Activated CD8-positive, alpha-beta T cell treated with anti-CD3 and anti-CD28 coated beads, Interleukin-2, amount 10 ng/mL, durations not matched to agents 7 days and 5 days (primary cell): ENCODE measurements at regions of chr15 and their contacts with region 1.

Region 1: DNA sequence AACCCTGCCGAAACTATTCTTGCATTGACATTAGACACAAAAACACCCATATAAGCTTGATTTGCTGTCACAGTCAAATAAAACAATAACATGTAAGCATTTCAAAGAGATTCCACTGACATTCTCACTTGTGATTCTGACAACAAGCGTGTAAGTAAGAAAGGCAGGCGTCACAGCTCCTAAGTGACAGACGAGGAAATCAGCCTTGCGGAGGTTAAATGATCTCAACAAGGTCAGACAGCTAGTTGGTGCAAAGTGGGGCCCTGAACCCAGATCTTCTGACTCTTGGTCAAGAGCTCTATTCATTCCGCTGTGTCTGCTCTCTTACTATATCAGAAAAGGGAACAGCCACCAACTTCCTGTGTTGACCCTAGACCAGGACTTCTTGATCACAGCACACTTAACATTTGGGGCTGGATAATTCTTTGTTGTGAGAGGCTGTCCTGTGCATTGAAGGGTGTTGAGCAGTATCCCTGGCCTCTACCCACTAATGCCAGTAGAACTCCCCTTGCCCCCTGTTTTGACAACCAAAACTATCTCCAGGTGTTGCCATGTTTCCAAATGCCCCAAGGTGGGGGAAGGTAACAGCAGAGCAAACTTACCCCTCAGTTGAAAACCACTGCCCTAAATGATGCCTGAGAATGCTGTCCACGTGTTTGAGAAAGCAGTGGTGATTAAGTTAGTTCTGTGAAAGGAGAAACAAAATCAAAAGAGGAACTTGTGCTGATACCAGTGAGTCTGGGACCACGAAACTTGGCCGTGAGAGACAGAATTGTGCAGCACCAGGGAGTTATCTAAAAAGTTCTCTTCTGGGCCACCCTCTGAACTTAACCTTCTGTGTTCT is 86.1 kb downstream of the LIPC start:
- DNase-seq: peak; percentile 48
- ATAC-seq: peak; percentile 36
- H3K4me3 Mint-ChIP-seq: peak overlapping the region; percentile 15
- H3K27ac Mint-ChIP-seq: peak overlapping the region; percentile 88
- H3K4me1 Mint-ChIP-seq: peaks cover 69% of the 10 kb centered on the region
- H3K27me3 Mint-ChIP-seq: no peaks in the 10 kb centered on the region

Region 2: GRCh38 chr15:58440158-58440910 is 77.6 kb before region 1 on chr15:
- CTCF ChIA-PET with region 1: interaction called, 13 read pairs
- POLR2A ChIA-PET with region 1: no interaction called
- DNase-seq: no peak
- ATAC-seq: no peak
- H3K4me3 Mint-ChIP-seq: no peak overlapping the region
- H3K27ac Mint-ChIP-seq: peak overlapping the region; percentile 5
- H3K4me1 Mint-ChIP-seq: peaks cover 41% of the 10 kb centered on the region
- H3K27me3 Mint-ChIP-seq: no peaks in the 10 kb centered on the region

Region 3: DNA sequence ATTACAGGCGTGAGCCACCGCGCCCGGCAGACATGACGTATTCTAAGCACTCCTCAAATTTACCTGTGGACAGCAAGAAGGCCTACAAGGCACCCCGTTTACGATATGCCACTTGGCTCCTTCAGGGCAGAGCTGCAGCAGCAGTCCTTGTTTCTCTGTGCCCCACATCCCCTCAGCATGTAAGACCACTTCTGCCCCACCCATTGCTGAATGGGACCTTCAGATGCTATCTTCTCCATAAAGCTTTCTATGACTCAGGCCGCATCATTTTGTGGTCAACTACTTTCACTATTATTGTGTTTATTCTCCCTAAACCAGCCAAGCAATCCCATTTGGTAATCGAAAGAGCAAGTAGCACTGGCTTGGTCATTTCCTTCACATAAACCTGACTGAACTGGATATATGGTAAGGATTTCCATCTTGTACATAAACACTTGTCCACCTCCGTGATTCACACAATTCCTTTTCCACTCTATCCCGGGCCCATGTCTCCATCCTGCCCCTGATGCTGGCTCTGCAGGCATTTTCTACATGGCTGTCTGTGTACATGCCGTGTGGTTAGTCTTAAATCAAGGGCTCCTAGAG is 60.4 kb before region 1 on chr15:
- CTCF ChIA-PET with region 1: interaction called, 20 read pairs
- POLR2A ChIA-PET with region 1: interaction called, 6 read pairs
- DNase-seq: peak; percentile 64
- ATAC-seq: peak; percentile 64
- H3K4me3 Mint-ChIP-seq: no peak overlapping the region
- H3K27ac Mint-ChIP-seq: peak overlapping the region; percentile 72
- H3K4me1 Mint-ChIP-seq: peaks cover 81% of the 10 kb centered on the region
- H3K27me3 Mint-ChIP-seq: no peaks in the 10 kb centered on the region

Region 4: GRCh38 chr15:58475573-58476524 is 42.1 kb before region 1 on chr15:
- CTCF ChIA-PET with region 1: interaction called, 11 read pairs
- POLR2A ChIA-PET with region 1: interaction called, 4 read pairs
- DNase-seq: peak; percentile 35
- ATAC-seq: no peak
- H3K4me3 Mint-ChIP-seq: peak overlapping the region; percentile 44
- H3K27ac Mint-ChIP-seq: peak overlapping the region; percentile 95
- H3K4me1 Mint-ChIP-seq: peaks cover 78% of the 10 kb centered on the region
- H3K27me3 Mint-ChIP-seq: no peaks in the 10 kb centered on the region

Region 5: GRCh38 chr15:58484791-58485600 is 32.9 kb before region 1 on chr15:
- CTCF ChIA-PET with region 1: interaction called, 5 read pairs
- POLR2A ChIA-PET with region 1: interaction called, 17 read pairs
- DNase-seq: peak; percentile 85
- ATAC-seq: peak; percentile 81
- H3K4me3 Mint-ChIP-seq: peak overlapping the region; percentile 60
- H3K27ac Mint-ChIP-seq: peak overlapping the region; percentile 95
- H3K4me1 Mint-ChIP-seq: peaks cover 53% of the 10 kb centered on the region
- H3K27me3 Mint-ChIP-seq: no peaks in the 10 kb centered on the region

Region 6: GRCh38 chr15:58495891-58496408 is 22.0 kb before region 1 on chr15:
- CTCF ChIA-PET with region 1: interaction called, 10 read pairs
- POLR2A ChIA-PET with region 1: interaction called, 3 read pairs
- DNase-seq: no peak
- ATAC-seq: peak; percentile 60
- H3K4me3 Mint-ChIP-seq: no peak overlapping the region
- H3K27ac Mint-ChIP-seq: peak overlapping the region; percentile 58
- H3K4me1 Mint-ChIP-seq: peaks cover 44% of the 10 kb centered on the region
- H3K27me3 Mint-ChIP-seq: no peaks in the 10 kb centered on the region

Region 7: DNA sequence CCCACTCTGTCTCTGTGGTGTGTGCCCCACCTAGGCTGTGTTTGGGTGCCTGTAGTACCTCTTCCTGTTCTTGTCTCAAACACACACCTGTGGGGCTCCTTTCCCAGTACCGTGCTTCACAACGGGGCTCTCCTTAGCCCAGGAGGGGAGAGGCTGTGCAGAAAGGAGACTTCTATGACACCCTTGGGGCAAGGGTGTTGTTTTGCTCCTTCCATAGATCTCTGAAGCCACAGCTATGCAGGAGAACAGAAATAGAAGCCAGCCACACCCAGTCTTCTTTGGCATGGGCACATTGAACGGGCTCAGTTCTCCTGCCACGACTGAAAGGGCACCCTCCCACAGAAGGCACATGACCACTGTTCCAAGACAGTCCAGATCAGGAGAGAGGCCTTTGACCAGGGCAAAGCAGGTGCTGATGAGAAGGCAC is 11.8 kb before region 1 on chr15:
- CTCF ChIA-PET with region 1: interaction called, 17 read pairs
- POLR2A ChIA-PET with region 1: interaction called, 7 read pairs
- DNase-seq: no peak
- ATAC-seq: peak; percentile 23
- H3K4me3 Mint-ChIP-seq: no peak overlapping the region
- H3K27ac Mint-ChIP-seq: peak overlapping the region; percentile 62
- H3K4me1 Mint-ChIP-seq: peaks cover 25% of the 10 kb centered on the region
- H3K27me3 Mint-ChIP-seq: peaks cover 5% of the 10 kb centered on the region